ENCODE measurements at regions of chr19 and their contacts with region 1.

Region 1: GRCh38 chr19:48255376-48256303 is at the start of gene CARD8:
- DNase-seq: peak; percentile 83 to 86
- H3K4me3 ChIP-seq: peak within 1 kb of the TSS; percentile 58 to 65
- H3K27ac ChIP-seq: peak within 1 kb of the TSS; percentile 86 to 87
- H3K4me1 ChIP-seq: peaks cover 0 to 17% (median 13%) of the 10 kb centered on the region in 4 donors
- H3K27me3 ChIP-seq: no peaks in the 10 kb centered on the region
- CTCF ChIP-seq: peak; percentile 7 to 31

Region 2: GRCh38 chr19:48170038-48170812 is 85.4 kb before region 1 on chr19 and contains the starts of genes LIG1 and ZSWIM9:
- intact Hi-C with region 1: loop called (anchors 10 kb)
- DNase-seq: peak; percentile 88 to 95
- H3K4me3 ChIP-seq: peak within 1 kb of the TSS; percentile 83 to 84
- H3K27ac ChIP-seq: peak within 1 kb of the TSS; percentile 86 to 89
- H3K4me1 ChIP-seq: peaks cover 0 to 19% (median 17%) of the 10 kb centered on the region in 4 donors
- H3K27me3 ChIP-seq: no peaks in the 10 kb centered on the region
- CTCF ChIP-seq: no peak

Measured in tibial artery (tissue), 4 donors.